ENCODE measurements at regions of chr14 and their contacts with region 1.

Region 1: GRCh38 chr14:61710853-61711817 is 15.8 kb downstream of the HIF1A start:
- DNase-seq: no peak
- H3K4me3 ChIP-seq: peak overlapping the region; percentile 36
- H3K27ac ChIP-seq: peak overlapping the region; percentile 22
- H3K27me3 ChIP-seq: no peaks in the 10 kb centered on the region
- CTCF ChIP-seq: no peak

Region 2: DNA sequence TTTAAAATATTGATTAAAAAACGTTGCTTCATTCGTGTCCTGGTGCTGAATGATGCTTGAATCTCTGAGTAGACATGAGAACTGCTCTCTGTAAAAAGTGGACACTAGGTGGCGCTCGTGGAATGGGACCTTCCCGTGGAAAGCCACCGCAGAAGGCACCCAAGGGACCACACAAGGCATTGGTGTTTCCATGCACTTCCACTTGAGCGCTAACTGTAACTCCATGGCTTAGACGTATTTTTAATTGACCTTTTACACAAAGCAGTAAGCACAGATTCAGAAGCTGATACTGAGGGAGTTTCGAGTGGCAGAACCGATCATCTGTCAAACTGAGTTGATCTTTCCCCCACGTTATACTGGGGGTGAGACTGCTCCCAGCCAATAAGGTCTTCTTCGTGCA is 254.4 kb before region 1 on chr14:
- in situ Hi-C with region 1: loop called (anchors 25 kb)
- DNase-seq: peak; percentile 86
- H3K4me3 ChIP-seq: no peak overlapping the region
- H3K27ac ChIP-seq: no peak overlapping the region
- H3K27me3 ChIP-seq: no peaks in the 10 kb centered on the region
- CTCF ChIP-seq: peak; percentile 87

Region 3: GRCh38 chr14:61568572-61569131 is 142.5 kb before region 1 on chr14:
- in situ Hi-C with region 1: loop called (anchors 25 kb)
- DNase-seq: no peak
- H3K4me3 ChIP-seq: peak overlapping the region; percentile 10
- H3K27ac ChIP-seq: peak overlapping the region; percentile 98
- H3K27me3 ChIP-seq: no peaks in the 10 kb centered on the region
- CTCF ChIP-seq: peak; percentile 24

Measured in brain microvascular endothelial cell (primary cell).